ENCODE measurements at regions of chr1 and their contacts with region 1.

Region 1: GRCh38 chr1:87279966-87280535 is 48.6 kb upstream of the LMO4 start:
- DNase-seq: no peak
- ATAC-seq: no peak
- H3K4me3 ChIP-seq: no peak overlapping the region
- H3K27ac ChIP-seq: no peak overlapping the region
- H3K4me1 ChIP-seq: no peaks in the 10 kb centered on the region
- H3K27me3 ChIP-seq: peaks cover 9% of the 10 kb centered on the region
- CTCF ChIP-seq: peak; percentile 36; the same call in 1 of the 2 replicates

Region 2: DNA sequence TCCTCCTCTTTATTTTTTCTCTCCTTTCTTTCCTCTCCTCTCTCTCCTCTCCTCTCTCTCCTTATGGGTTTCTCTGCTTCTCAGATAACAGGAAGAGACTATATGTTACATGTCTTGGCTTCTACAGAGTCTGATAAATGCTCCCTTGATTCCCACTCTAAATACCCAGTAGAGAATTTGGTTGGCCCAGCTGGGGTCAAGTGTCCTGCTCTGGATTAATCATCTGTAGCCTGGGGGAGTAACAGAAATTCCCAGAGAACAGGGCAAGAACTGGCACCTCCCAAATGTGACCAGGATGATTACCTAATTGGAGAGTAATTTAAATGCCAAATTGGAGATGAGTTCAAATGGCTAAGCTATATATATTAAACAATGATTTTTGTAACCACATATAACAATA is 97.4 kb before region 1 on chr1:
- CTCF ChIA-PET with region 1: interaction called, 15 read pairs
- POLR2A ChIA-PET with region 1: no interaction called
- in situ Hi-C with region 1: no loop called
- intact Hi-C with region 1: no loop called
- DNase-seq: no peak
- ATAC-seq: no peak
- H3K4me3 ChIP-seq: no peak overlapping the region
- H3K27ac ChIP-seq: no peak overlapping the region
- H3K4me1 ChIP-seq: no peaks in the 10 kb centered on the region
- H3K27me3 ChIP-seq: peaks cover 17% of the 10 kb centered on the region
- CTCF ChIP-seq: no peak

Region 3: GRCh38 chr1:87305762-87306161 is 25.7 kb after region 1 on chr1:
- CTCF ChIA-PET with region 1: no interaction called
- POLR2A ChIA-PET with region 1: no interaction called
- in situ Hi-C with region 1: no loop called
- intact Hi-C with region 1: no loop called
- DNase-seq: no peak
- ATAC-seq: no peak
- H3K4me3 ChIP-seq: no peak overlapping the region
- H3K27ac ChIP-seq: no peak overlapping the region
- H3K4me1 ChIP-seq: no peaks in the 10 kb centered on the region
- H3K27me3 ChIP-seq: peaks cover 24% of the 10 kb centered on the region
- CTCF ChIP-seq: no peak

Measured in Panc1 (cell line).